B cell (primary cell): ENCODE measurements at regions of chr13 and their contacts with region 1.

Region 1: DNA sequence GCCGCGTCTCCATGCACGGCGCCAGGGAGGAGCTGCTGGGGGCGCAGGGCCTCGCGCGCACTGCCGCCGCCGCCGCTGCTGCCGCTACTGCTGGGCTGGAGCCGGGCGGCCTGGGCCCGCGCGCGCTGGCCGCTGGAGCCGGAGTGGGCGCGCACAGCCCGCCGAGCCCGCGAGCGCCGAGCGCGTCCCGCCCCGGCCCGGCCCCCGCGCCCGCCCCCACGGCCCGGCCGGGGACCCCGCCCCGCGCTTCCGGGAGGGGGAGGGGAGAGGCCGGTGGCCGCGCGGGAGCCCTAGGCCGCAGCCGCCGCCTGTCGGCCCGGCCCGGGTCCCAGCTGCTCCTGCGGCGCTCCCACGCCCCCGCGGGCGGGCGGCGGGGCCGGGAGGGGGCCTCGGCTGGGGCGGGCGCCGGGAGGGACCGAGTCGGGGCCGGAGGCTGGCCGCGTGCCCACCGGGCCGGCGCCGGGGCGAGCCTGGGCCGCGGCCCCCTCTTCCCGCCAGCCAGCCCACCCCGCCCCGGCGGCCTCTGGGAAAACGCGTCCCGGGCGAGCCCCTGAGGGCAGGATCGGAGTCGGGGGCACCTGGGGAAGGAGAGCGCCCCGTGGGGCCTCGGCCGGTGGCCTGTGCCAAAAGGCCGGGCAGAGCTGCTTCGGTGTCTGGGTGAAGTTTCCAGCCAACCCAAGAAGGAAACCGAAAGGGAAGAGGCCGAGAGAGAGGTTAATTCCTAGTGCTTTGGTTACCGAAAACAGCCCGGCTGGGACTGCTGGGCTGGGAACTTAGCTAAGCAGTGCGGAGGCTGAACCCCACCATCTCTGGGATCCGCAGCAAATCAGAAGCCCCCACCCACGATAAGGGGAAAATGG is at the start of gene STK24:
- DNase-seq: peak; percentile 80
- ATAC-seq: peak; percentile 83
- H3K4me3 ChIP-seq: peak within 1 kb of the TSS; percentile 51 to 88 (median 72)
- H3K4me3 Mint-ChIP-seq: peak within 1 kb of the TSS; percentile 95
- H3K27ac ChIP-seq: peak within 1 kb of the TSS; percentile 67 to 87
- H3K27ac Mint-ChIP-seq: peak within 1 kb of the TSS; percentile 95
- H3K4me1 ChIP-seq: peaks cover 38 to 39% of the 10 kb centered on the region in 2 donors
- H3K4me1 Mint-ChIP-seq: peaks cover 37% of the 10 kb centered on the region
- H3K27me3 ChIP-seq: no peaks in the 10 kb centered on the region
- H3K27me3 Mint-ChIP-seq: no peaks in the 10 kb centered on the region
- CTCF ChIP-seq: no peak
- total RNA-seq, gene STK24: 117 and 120 TPM in 2 replicates

Region 2: DNA sequence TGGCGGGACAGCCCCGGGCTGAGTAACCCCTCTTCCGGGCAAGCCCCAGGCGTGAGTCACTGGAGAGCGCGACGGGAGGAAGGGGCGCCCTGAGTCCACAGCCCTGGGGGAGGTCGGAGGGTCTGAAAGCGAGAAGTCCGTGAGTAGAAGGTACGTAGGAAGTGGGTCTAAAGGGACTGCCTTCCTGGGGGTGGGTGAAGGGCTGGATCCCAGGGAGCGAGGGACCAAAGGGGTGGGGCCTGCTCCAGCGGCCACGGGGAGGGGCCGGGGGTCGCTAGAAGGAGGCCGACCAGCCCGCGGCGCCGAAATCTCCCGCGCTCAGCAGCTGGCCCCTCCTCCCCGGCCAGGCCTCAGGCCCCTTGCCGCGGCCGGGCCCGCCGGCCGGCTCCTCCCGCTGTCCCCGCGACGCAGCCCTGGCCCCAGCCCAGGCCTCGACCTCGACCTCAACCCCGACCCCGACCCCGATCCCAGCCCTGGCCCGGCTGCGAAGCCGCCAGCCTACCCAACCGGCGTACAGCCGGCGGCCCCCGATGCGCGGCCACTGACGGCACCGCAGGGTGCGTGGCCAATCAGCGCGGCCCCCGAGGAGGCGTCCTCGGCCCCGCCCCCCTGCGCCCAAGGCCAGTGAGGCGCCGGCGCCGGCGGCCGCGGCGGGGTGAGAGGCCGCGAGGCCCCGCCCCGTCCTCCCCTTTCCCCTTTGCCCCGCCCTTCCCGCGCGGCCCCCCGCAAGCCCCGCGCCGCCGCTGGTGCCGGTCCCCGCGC is 601.2 kb before region 1 on chr13:
- CTCF ChIA-PET with region 1: no interaction called
- POLR2A ChIA-PET with region 1: no interaction called
- intact Hi-C with region 1: loop called (anchors 2 kb)
- DNase-seq: peak; percentile 93
- ATAC-seq: peak; percentile 92
- H3K4me3 ChIP-seq: peak overlapping the region; percentile 44 to 87 (median 84)
- H3K4me3 Mint-ChIP-seq: peak overlapping the region; percentile 92
- H3K27ac ChIP-seq: peak overlapping the region; percentile 61 to 92
- H3K27ac Mint-ChIP-seq: peak overlapping the region; percentile 91
- H3K4me1 ChIP-seq: peaks cover 14 to 20% of the 10 kb centered on the region in 2 donors
- H3K4me1 Mint-ChIP-seq: peaks cover 30% of the 10 kb centered on the region
- H3K27me3 ChIP-seq: no peaks in the 10 kb centered on the region
- H3K27me3 Mint-ChIP-seq: peaks cover 9% of the 10 kb centered on the region
- CTCF ChIP-seq: no peak

Region 3: GRCh38 chr13:98542568-98543377 is 34.4 kb before region 1 on chr13:
- CTCF ChIA-PET with region 1: no interaction called
- POLR2A ChIA-PET with region 1: interaction called, 3 read pairs
- intact Hi-C with region 1: loop called (anchors 5 kb)
- DNase-seq: peak; percentile 46
- ATAC-seq: peak; percentile 50
- H3K4me3 ChIP-seq: peak overlapping the region; percentile 1 to 58 (median 27)
- H3K4me3 Mint-ChIP-seq: peak overlapping the region; percentile 81
- H3K27ac ChIP-seq: peak overlapping the region; percentile 25 to 55
- H3K27ac Mint-ChIP-seq: peak overlapping the region; percentile 73
- H3K4me1 ChIP-seq: peaks cover 42 to 44% of the 10 kb centered on the region in 2 donors
- H3K4me1 Mint-ChIP-seq: peaks cover 87% of the 10 kb centered on the region
- H3K27me3 ChIP-seq: no peaks in the 10 kb centered on the region
- H3K27me3 Mint-ChIP-seq: no peaks in the 10 kb centered on the region
- CTCF ChIP-seq: no peak